ENCODE measurements at regions of chr1 and their contacts with region 1.

Region 1: DNA sequence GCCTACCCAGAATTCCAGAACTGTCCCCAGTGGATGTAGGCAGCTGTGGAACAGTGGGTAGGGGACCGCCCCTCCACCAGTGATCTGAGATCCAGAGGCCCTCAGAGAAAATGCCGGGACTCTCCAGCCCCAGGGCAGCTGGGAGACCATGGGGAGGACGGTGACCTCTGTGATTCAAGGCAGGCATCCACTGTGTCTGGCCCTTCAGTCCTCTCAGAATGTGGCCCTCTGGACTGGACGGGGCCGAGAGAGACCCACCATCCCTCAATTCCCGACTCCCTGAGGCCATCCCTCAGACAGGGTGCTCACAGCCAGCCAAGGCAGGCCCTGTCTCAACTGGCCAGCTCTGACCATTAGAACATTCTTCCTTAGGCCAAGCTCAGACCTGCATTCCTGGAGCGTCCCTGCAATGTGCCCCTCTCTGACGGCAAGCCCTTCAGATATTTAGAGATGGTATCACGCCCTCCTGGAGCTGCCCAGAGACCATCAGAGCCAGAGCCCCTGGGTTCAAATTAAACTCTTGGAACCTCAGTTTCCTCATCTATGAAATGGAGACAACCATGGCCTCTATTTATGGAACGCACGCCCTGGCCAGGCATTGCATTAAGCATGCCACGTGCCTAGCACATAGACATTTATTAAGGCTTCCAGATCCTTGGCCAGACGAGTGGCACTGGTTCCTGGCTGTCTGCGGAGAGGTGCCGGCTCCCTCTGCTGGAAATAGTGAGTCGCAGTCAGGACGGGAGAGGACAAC is 9.6 kb upstream of the EPS8L3 start:
- DNase-seq: peak; percentile 67 to 90 (median 76)
- ATAC-seq: peak; percentile 95
- H3K4me3 ChIP-seq: no peak overlapping the region
- H3K27ac ChIP-seq: no peak overlapping the region
- H3K4me1 ChIP-seq: peaks cover 11 to 12% of the 10 kb centered on the region in 2 experiments; a peak in 3 of 5 replicates
- H3K27me3 ChIP-seq: peaks cover 2 to 23% of the 10 kb centered on the region in 2 experiments; a peak in 3 of 5 replicates
- CTCF ChIP-seq: peak; percentile 97 to 99 (median 98)
- EP300 ChIP-seq: no peak
- POLR2A ChIP-seq: no peak
- RAD21 ChIP-seq: peak; percentile 100

Region 2: GRCh38 chr1:109307274-109308021 is 465.9 kb before region 1 on chr1:
- CTCF ChIA-PET with region 1: no interaction called
- POLR2A ChIA-PET with region 1: no interaction called
- in situ Hi-C with region 1: no loop called
- intact Hi-C with region 1: no loop called
- DNase-seq: peak; percentile 78 to 87 (median 80)
- ATAC-seq: peak; percentile 70
- H3K4me3 ChIP-seq: no peak overlapping the region
- H3K27ac ChIP-seq: peak overlapping the region; percentile 57
- H3K4me1 ChIP-seq: peaks cover 18 to 36% of the 10 kb centered on the region in 2 experiments
- H3K27me3 ChIP-seq: no peaks in the 10 kb centered on the region
- CTCF ChIP-seq: no peak
- EP300 ChIP-seq: peak; percentile 51; the same call in 1 of the 2 replicates
- POLR2A ChIP-seq: no peak
- RAD21 ChIP-seq: no peak; a peak in 1 of 4 replicates

Region 3: GRCh38 chr1:109327285-109327684 is 446.0 kb before region 1 on chr1:
- CTCF ChIA-PET with region 1: no interaction called
- POLR2A ChIA-PET with region 1: no interaction called
- in situ Hi-C with region 1: no loop called
- intact Hi-C with region 1: no loop called
- DNase-seq: no peak
- ATAC-seq: no peak
- H3K4me3 ChIP-seq: no peak overlapping the region
- H3K27ac ChIP-seq: no peak overlapping the region
- H3K4me1 ChIP-seq: no peaks in the 10 kb centered on the region
- H3K27me3 ChIP-seq: no peaks in the 10 kb centered on the region
- CTCF ChIP-seq: no peak
- EP300 ChIP-seq: no peak
- POLR2A ChIP-seq: no peak
- RAD21 ChIP-seq: no peak

Region 4: GRCh38 chr1:109466452-109467300 is 306.6 kb before region 1 on chr1 and contains the start of gene SYPL2:
- CTCF ChIA-PET with region 1: no interaction called
- POLR2A ChIA-PET with region 1: no interaction called
- in situ Hi-C with region 1: no loop called
- intact Hi-C with region 1: no loop called
- DNase-seq: peak; percentile 43 to 64 (median 58)
- ATAC-seq: peak; percentile 85
- H3K4me3 ChIP-seq: peak within 1 kb of the TSS; percentile 38
- H3K27ac ChIP-seq: no peak within 1 kb of the TSS
- H3K4me1 ChIP-seq: peaks cover 0 to 11% of the 10 kb centered on the region in 2 experiments; a peak in 3 of 5 replicates
- H3K27me3 ChIP-seq: peaks cover 56 to 61% of the 10 kb centered on the region in 2 experiments
- CTCF ChIP-seq: peak in 1 of 3 experiments; percentile 15; a peak in 1 of 6 replicates
- EP300 ChIP-seq: no peak
- POLR2A ChIP-seq: no peak
- RAD21 ChIP-seq: no peak
- polyA plus RNA-seq, gene SYPL2: 0.03 TPM in 1 of 2 experiments, not detected in the other

Region 5: GRCh38 chr1:109718491-109718890 is 54.8 kb before region 1 on chr1:
- CTCF ChIA-PET with region 1: interaction called, 3 read pairs
- POLR2A ChIA-PET with region 1: interaction called, 4 read pairs
- in situ Hi-C with region 1: no loop called
- intact Hi-C with region 1: loop called (anchors 1 kb)
- DNase-seq: peak; percentile 44 to 53 (median 48)
- ATAC-seq: peak; percentile 73
- H3K4me3 ChIP-seq: no peak overlapping the region
- H3K27ac ChIP-seq: peak overlapping the region; percentile 43; the same call in 2 of the 3 replicates
- H3K4me1 ChIP-seq: peaks cover 5 to 21% of the 10 kb centered on the region in 2 experiments; a peak in 4 of 5 replicates
- H3K27me3 ChIP-seq: peaks cover 0 to 6% of the 10 kb centered on the region in 2 experiments; a peak in 2 of 5 replicates
- CTCF ChIP-seq: peak; percentile 28 to 73 (median 43)
- EP300 ChIP-seq: no peak
- POLR2A ChIP-seq: no peak
- RAD21 ChIP-seq: peak; percentile 70 to 82

Region 6: DNA sequence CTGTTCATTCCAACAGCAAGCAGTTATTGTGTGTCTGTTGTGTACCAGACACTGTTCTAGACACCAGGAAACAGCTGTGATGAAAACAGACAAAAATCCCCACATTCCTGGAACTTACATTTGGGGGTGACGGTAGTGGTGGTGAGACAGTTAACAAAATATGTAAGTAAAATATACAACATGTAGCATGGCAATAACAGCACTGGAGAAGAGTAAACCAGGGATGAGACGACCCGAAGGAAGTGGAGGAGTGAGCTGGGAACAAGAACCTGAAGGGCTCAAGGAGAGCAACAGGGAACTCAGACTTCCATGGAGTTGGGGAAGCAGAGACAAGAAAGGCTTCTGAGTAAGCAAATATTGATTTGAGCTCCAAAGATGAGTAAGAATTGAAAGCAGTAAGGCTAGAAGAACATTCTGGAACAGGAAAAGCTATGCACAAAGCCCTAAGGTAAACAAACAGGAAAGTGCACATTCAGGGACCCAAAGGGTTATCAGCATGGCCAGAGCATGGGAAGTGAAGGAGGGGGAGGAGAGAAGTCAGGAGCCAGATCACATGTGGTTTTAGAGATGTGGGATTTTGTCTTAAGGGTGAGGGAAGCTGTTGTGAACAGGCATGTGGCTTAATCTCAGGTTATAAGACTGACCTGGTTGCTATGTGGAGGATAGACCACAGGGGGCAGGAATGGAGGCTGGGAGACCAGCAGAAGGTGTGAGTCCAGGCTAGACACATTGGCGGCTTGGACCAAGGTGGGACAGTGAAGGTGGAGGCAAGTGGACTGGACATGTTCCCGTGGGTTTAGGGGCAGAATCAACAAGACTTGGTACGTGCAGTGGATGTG is 144.7 kb after region 1 on chr1:
- CTCF ChIA-PET with region 1: interaction called, 3 read pairs
- POLR2A ChIA-PET with region 1: no interaction called
- in situ Hi-C with region 1: loop called (anchors 5 kb)
- intact Hi-C with region 1: no loop called
- DNase-seq: peak; percentile 86 to 95 (median 90)
- ATAC-seq: peak; percentile 93
- H3K4me3 ChIP-seq: no peak overlapping the region
- H3K27ac ChIP-seq: peak overlapping the region; percentile 70
- H3K4me1 ChIP-seq: peaks cover 28 to 33% of the 10 kb centered on the region in 2 experiments
- H3K27me3 ChIP-seq: no peaks in the 10 kb centered on the region
- CTCF ChIP-seq: peak; percentile 74 to 88 (median 77)
- EP300 ChIP-seq: peak; percentile 97
- POLR2A ChIP-seq: no peak
- RAD21 ChIP-seq: peak; percentile 42 to 70; a peak in 3 of 4 replicates

Region 7: GRCh38 chr1:110118636-110119615 is 345.6 kb after region 1 on chr1:
- CTCF ChIA-PET with region 1: no interaction called
- POLR2A ChIA-PET with region 1: no interaction called
- in situ Hi-C with region 1: no loop called
- intact Hi-C with region 1: loop called (anchors 5 kb)
- DNase-seq: no peak
- ATAC-seq: no peak
- H3K4me3 ChIP-seq: no peak overlapping the region
- H3K27ac ChIP-seq: no peak overlapping the region
- H3K4me1 ChIP-seq: no peaks in the 10 kb centered on the region
- H3K27me3 ChIP-seq: peaks cover 10 to 35% of the 10 kb centered on the region in 2 experiments; a peak in 4 of 5 replicates
- CTCF ChIP-seq: no peak
- EP300 ChIP-seq: no peak
- POLR2A ChIP-seq: no peak
- RAD21 ChIP-seq: no peak

Measured in K562 (cell line).